Endothelial cell of umbilical vein (primary cell): ENCODE measurements at regions of chr20 and their contacts with region 1.

Region 1: DNA sequence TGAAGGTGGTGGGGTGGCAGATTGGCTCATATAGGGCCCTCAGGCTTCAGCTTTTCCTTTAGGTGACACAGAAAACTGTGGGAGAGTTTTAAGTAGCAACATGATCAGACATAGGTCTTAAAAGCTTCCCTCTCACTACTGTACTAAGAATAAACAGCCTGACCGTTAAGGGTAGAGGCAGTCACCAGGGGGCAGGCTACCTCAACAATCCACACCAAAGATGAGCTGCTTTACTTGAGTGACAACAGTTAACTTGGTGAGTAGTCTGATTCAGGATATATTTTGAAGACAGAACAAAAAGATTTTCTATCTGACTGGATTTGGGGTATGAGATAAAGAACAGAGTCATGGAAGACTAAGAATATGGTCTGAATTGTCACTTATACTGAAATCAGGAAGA is 193.1 kb upstream of the SHLD1 start:
- DNase-seq: peak; percentile 63
- H3K4me3 ChIP-seq: no peak overlapping the region
- H3K27ac ChIP-seq: no peak overlapping the region
- H3K4me1 ChIP-seq: no peaks in the 10 kb centered on the region
- H3K27me3 ChIP-seq: no peaks in the 10 kb centered on the region
- CTCF ChIP-seq: peak; percentile 53 to 61
- POLR2A ChIP-seq: no peak

Region 2: GRCh38 chr20:5569021-5569420 is 11.9 kb after region 1 on chr20:
- CTCF ChIA-PET with region 1: interaction called, 30 read pairs
- POLR2A ChIA-PET with region 1: no interaction called
- dilution Hi-C with region 1: no loop called
- intact Hi-C with region 1: no loop called
- DNase-seq: peak; percentile 74
- H3K4me3 ChIP-seq: no peak overlapping the region
- H3K27ac ChIP-seq: no peak overlapping the region
- H3K4me1 ChIP-seq: peaks cover 8% of the 10 kb centered on the region
- H3K27me3 ChIP-seq: no peaks in the 10 kb centered on the region
- CTCF ChIP-seq: peak; percentile 31 to 39
- POLR2A ChIP-seq: no peak

Region 3: DNA sequence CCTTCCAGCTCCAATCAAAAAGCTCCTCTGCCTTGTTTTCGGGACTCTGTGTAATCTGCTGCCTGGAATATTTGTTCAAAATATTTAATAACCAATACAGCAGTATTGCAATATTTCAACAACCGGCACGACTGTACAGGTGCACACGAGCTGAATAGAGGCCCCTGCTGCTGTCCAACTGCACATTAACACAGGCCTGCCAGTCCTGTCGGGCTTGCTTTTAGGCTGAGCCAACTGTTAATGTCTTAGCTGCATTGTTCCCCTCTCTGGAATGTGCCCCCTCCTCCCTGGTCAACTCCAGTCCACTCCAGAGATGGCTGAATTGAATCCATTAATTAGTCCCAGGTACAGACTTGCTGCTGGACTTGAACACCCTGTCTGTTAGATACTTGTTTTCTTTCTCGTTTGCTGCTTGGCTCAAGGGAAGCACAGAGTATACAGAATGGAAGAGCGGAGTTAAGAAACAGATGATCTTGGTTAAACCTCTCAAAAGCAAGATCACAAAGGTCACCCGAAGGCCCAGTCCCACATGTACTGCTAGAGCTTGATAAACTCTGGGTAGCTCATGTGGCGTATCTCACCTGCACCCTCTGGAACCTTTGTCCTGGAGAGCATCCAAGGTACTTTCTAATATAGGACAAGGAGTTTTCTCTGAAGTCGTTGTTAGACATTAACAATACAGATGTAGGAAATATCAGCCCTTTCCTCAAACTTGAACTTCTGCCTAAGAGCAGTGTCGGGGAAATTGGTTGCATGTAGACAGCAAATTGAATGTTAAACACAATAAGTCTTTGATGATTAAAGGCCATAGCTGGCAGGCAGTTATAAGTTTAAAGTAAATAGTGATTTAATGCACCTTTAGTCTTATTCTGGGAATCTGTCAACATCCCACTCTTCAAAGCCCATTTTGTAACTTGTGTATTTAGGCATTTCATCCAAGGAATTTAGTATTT is 225.0 kb after region 1 on chr20:
- CTCF ChIA-PET with region 1: interaction called, 215 read pairs
- POLR2A ChIA-PET with region 1: no interaction called
- dilution Hi-C with region 1: no loop called
- intact Hi-C with region 1: no loop called
- DNase-seq: no peak
- H3K4me3 ChIP-seq: no peak overlapping the region
- H3K27ac ChIP-seq: no peak overlapping the region
- H3K4me1 ChIP-seq: peaks cover 1% of the 10 kb centered on the region
- H3K27me3 ChIP-seq: no peaks in the 10 kb centered on the region
- CTCF ChIP-seq: no peak
- POLR2A ChIP-seq: no peak

Region 4: DNA sequence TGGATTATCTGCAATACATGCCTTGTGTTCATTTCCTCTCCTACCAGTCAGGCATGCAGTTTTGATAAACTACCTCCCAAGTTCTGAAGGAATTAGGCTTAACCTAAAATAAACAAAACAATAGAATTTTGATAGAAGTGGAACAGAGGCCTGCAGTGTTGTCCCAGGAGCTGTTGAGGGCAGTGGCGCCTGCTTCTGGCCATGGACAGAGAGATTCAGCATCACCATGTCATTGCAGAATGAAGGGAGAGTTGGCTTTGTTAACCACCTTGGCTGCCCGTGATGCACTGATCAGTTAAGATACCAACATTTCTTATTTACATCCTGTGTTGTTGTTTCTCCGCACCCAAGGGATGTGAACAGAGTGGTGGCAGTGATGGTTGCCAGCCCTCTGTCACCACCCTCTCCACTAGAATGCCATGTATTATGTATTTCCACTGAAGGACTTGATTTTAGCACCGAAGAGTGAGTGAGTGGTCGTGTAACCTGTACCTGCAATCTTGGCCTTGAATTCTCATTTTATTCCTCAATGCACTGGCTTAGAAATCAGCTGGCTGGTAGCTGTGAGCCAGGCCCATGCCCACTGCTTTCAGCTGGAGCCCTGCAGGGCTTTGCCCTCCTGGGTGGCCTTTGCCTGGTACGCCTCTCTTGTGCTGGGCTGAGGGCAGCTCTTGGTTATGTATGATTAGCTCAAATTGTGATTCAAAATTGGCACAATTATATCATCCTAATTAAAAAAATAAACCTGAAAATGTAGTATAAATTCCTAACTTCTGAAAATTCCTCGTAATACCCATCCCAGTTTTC is 249.5 kb after region 1 on chr20:
- CTCF ChIA-PET with region 1: interaction called, 10 read pairs
- POLR2A ChIA-PET with region 1: no interaction called
- dilution Hi-C with region 1: no loop called
- intact Hi-C with region 1: no loop called
- DNase-seq: peak; percentile 11
- H3K4me3 ChIP-seq: no peak overlapping the region
- H3K27ac ChIP-seq: no peak overlapping the region
- H3K4me1 ChIP-seq: peaks cover 14% of the 10 kb centered on the region
- H3K27me3 ChIP-seq: no peaks in the 10 kb centered on the region
- CTCF ChIP-seq: peak; percentile 15
- POLR2A ChIP-seq: no peak

Region 5: DNA sequence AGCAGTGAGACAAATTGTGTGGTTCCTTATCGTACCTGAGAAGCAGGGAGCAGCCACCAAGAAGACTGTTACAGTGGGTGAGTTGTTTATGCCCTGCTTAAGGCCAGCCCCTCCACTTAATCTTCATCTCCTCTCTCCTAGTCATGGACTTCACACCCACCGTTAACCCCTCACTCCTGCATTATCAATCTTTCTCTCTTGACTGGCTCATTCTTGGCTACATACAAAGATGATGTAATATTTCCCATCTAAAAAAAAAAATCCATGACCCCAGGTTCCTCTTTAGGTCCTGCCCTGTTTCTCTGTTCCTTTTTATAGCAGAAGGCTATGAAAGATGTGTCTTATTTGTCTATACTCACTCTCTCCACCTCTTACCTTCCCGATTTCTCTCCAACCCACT is 265.4 kb after region 1 on chr20:
- CTCF ChIA-PET with region 1: interaction called, 10 read pairs
- POLR2A ChIA-PET with region 1: no interaction called
- dilution Hi-C with region 1: no loop called
- intact Hi-C with region 1: no loop called
- DNase-seq: peak; percentile 45
- H3K4me3 ChIP-seq: no peak overlapping the region
- H3K27ac ChIP-seq: no peak overlapping the region
- H3K4me1 ChIP-seq: peaks cover 8% of the 10 kb centered on the region
- H3K27me3 ChIP-seq: no peaks in the 10 kb centered on the region
- CTCF ChIP-seq: no peak
- POLR2A ChIP-seq: no peak

Region 6: GRCh38 chr20:6008254-6008653 is 451.1 kb after region 1 on chr20:
- CTCF ChIA-PET with region 1: interaction called, 17 read pairs
- POLR2A ChIA-PET with region 1: no interaction called
- dilution Hi-C with region 1: no loop called
- intact Hi-C with region 1: loop called (anchors 1 kb)
- DNase-seq: peak; percentile 74
- H3K4me3 ChIP-seq: peak overlapping the region in 1 of 3 experiments; percentile 14
- H3K27ac ChIP-seq: no peak overlapping the region
- H3K4me1 ChIP-seq: peaks cover 23% of the 10 kb centered on the region
- H3K27me3 ChIP-seq: no peaks in the 10 kb centered on the region
- CTCF ChIP-seq: no peak
- POLR2A ChIP-seq: no peak